Activated CD8-positive, alpha-beta T cell treated with anti-CD3 and anti-CD28 coated beads for 36 hours (primary cell): ENCODE measurements at regions of chr5 and their contacts with region 1.

Region 1: GRCh38 chr5:100903039-100903887 is at the start of gene ST8SIA4:
- DNase-seq: peak; percentile 98
- ATAC-seq: peak; percentile 72
- H3K4me3 Mint-ChIP-seq: peak within 1 kb of the TSS; percentile 98
- H3K27ac Mint-ChIP-seq: peak within 1 kb of the TSS; percentile 98
- H3K4me1 Mint-ChIP-seq: peaks cover 30% of the 10 kb centered on the region
- H3K27me3 Mint-ChIP-seq: no peaks in the 10 kb centered on the region
- CTCF ChIP-seq: no peak
- total RNA-seq, gene ST8SIA4: 31.6 to 34.1 TPM

Region 2: DNA sequence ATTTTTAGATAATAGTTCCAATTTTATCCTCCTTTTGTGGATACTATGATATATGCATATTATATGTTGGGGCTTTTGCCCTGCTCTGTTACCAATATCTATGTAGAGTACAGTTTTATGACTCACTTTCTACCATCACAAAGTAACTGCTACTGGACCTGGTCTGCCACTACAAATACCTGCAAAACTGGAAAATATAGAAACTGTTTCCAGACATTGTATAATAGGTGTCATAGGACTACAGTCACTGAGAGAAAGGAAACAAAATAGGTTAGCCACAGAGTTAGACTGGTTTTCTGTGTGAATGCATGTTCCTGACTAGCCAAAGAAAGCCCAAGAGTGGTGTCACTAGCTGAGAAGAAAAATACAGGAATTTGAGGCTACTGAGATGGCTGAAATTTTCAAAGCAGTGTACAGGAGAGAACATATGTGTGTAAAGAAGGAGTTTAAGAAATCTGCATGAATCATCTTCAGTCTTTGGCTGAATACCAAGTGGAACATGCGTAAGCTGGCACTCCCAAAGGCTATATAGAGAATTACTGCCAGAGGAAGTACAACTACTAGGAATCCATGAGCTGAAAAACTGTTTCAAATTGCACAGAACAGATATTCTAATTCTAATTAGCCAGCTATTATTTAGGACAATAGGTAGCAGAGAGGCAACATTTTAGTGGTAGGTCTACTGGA is 397.1 kb before region 1 on chr5:
- CTCF ChIA-PET with region 1: no interaction called
- POLR2A ChIA-PET with region 1: no interaction called
- intact Hi-C with region 1: no loop called
- DNase-seq: no peak
- ATAC-seq: no peak
- H3K4me3 Mint-ChIP-seq: no peak overlapping the region
- H3K27ac Mint-ChIP-seq: no peak overlapping the region
- H3K4me1 Mint-ChIP-seq: no peaks in the 10 kb centered on the region
- H3K27me3 Mint-ChIP-seq: no peaks in the 10 kb centered on the region
- CTCF ChIP-seq: no peak

Region 3: GRCh38 chr5:100772548-100772947 is 130.7 kb before region 1 on chr5:
- CTCF ChIA-PET with region 1: interaction called, 29 read pairs
- POLR2A ChIA-PET with region 1: interaction called, 50 read pairs
- intact Hi-C with region 1: no loop called
- DNase-seq: no peak
- ATAC-seq: no peak
- H3K4me3 Mint-ChIP-seq: no peak overlapping the region
- H3K27ac Mint-ChIP-seq: no peak overlapping the region
- H3K4me1 Mint-ChIP-seq: peaks cover 11% of the 10 kb centered on the region
- H3K27me3 Mint-ChIP-seq: no peaks in the 10 kb centered on the region
- CTCF ChIP-seq: no peak

Region 4: GRCh38 chr5:100840384-100840783 is 62.9 kb before region 1 on chr5:
- CTCF ChIA-PET with region 1: interaction called, 8 read pairs
- POLR2A ChIA-PET with region 1: interaction called, 64 read pairs
- intact Hi-C with region 1: loop called (anchors 5 kb)
- DNase-seq: peak; percentile 70
- ATAC-seq: peak; percentile 87
- H3K4me3 Mint-ChIP-seq: peak overlapping the region; percentile 26
- H3K27ac Mint-ChIP-seq: peak overlapping the region; percentile 91
- H3K4me1 Mint-ChIP-seq: peaks cover 70% of the 10 kb centered on the region
- H3K27me3 Mint-ChIP-seq: no peaks in the 10 kb centered on the region
- CTCF ChIP-seq: no peak

Region 5: GRCh38 chr5:100860407-100860806 is 42.9 kb before region 1 on chr5:
- CTCF ChIA-PET with region 1: interaction called, 22 read pairs
- POLR2A ChIA-PET with region 1: interaction called, 124 read pairs
- intact Hi-C with region 1: loop called (anchors 2 kb)
- DNase-seq: peak; percentile 40
- ATAC-seq: peak; percentile 64
- H3K4me3 Mint-ChIP-seq: no peak overlapping the region
- H3K27ac Mint-ChIP-seq: peak overlapping the region; percentile 94
- H3K4me1 Mint-ChIP-seq: peaks cover 67% of the 10 kb centered on the region
- H3K27me3 Mint-ChIP-seq: no peaks in the 10 kb centered on the region
- CTCF ChIP-seq: no peak

Region 6: DNA sequence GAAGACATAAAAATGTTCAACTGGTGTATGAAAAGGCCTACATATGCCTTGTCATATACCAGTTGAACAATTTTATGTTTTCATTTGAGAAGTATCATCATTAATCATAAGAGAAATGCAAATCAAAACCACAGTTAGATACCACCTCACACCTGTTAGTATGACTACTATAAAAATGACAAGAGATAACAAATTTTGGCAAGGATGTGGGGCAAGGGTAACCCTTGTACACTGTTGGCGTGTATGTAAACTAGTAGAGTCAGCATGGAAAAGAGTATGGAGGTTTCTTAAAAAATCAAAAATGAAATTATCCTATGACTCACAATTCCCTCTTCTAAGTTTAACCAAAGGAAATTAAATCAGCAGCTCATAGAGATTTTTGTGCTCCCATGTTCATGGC is 250.3 kb after region 1 on chr5:
- CTCF ChIA-PET with region 1: no interaction called
- POLR2A ChIA-PET with region 1: no interaction called
- intact Hi-C with region 1: loop called (anchors 5 kb)
- DNase-seq: no peak
- ATAC-seq: no peak
- H3K4me3 Mint-ChIP-seq: no peak overlapping the region
- H3K27ac Mint-ChIP-seq: no peak overlapping the region
- H3K4me1 Mint-ChIP-seq: peaks cover 2% of the 10 kb centered on the region
- H3K27me3 Mint-ChIP-seq: no peaks in the 10 kb centered on the region
- CTCF ChIP-seq: no peak